ENCODE measurements at regions of chr9 and their contacts with region 1.

Region 1: DNA sequence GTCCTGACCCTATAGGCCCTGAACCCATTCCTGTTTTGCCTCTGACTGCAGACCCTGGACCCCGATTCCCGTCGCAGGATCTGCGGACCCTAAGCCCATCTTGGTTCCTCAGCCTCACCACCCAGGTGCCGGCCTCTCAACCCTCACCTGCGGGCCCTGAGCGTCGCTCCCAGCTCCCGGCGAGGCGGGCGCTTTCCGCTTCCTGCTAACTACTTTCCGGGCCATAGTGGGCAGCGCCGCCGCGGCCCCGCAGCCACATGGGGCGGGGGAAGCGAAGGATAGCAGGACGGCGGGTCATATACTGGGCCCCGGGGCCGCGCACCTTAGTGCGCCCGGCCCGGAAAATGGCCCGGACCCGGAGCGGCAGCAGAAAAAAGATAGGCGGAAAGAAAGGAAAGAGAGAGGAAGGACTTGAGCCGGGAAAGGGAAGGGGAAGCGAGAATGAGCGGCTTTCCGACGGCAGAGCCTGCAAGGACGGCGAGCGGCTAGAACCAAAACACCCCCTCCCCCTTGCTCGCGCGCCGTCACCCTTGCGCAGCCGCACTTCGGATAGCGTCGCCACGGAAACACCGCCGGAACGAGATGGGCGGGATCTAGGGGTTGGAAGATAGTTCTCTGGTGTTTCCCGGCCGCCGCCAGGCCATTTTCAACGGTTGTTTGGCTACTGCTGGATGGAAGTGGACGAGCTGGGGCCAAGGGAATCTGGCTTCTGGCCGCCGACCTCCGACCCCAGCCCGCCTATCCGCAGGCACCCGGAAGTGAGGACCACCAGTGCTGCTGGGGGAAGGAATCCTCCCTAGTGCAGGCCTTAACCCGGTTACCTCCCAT is at the start of gene DCAF12:
- DNase-seq: peak; percentile 74 to 82
- H3K4me3 ChIP-seq: peak within 1 kb of the TSS; percentile 97
- H3K27ac ChIP-seq: peak within 1 kb of the TSS; percentile 71
- H3K4me1 ChIP-seq: peaks cover 14% of the 10 kb centered on the region
- H3K27me3 ChIP-seq: no peaks in the 10 kb centered on the region
- CTCF ChIP-seq: no peak
- total RNA-seq, gene DCAF12: 18.1 and 23.4 TPM in 2 replicates

Region 2: DNA sequence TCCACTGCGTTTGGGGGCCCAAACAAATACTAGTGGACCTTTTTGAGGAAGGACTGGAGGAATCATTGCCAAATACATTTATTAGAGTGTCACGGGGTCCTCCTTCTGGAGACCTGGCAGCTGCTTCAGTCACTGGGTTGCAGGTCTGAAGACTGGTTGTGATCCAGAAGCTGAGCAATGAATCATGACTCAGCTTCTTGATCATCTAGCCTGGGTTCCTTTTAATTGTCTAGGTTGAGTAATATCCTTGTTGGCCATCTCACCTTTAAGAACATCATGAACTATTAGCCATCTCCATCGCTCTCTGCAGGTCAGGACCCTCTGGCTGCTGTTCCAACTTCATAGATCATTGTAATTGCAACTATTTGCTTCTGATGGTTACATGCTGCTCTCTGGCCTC is 37.0 kb after region 1 on chr9:
- CTCF ChIA-PET with region 1: no interaction called
- POLR2A ChIA-PET with region 1: no interaction called
- intact Hi-C with region 1: no loop called
- DNase-seq: peak; percentile 4 to 45
- H3K4me3 ChIP-seq: no peak overlapping the region
- H3K27ac ChIP-seq: peak overlapping the region; percentile 48; the same call in 1 of the 2 replicates
- H3K4me1 ChIP-seq: peaks cover 12% of the 10 kb centered on the region
- H3K27me3 ChIP-seq: no peaks in the 10 kb centered on the region
- CTCF ChIP-seq: no peak

Region 3: GRCh38 chr9:34179213-34180136 is 53.1 kb after region 1 on chr9:
- CTCF ChIA-PET with region 1: no interaction called
- POLR2A ChIA-PET with region 1: interaction called, 3 read pairs
- intact Hi-C with region 1: loop called (anchors 2 kb)
- DNase-seq: peak in 1 of 2 experiments; percentile 51
- H3K4me3 ChIP-seq: peak overlapping the region; percentile 76
- H3K27ac ChIP-seq: peak overlapping the region; percentile 91
- H3K4me1 ChIP-seq: peaks cover 20% of the 10 kb centered on the region
- H3K27me3 ChIP-seq: no peaks in the 10 kb centered on the region
- CTCF ChIP-seq: no peak

Region 4: DNA sequence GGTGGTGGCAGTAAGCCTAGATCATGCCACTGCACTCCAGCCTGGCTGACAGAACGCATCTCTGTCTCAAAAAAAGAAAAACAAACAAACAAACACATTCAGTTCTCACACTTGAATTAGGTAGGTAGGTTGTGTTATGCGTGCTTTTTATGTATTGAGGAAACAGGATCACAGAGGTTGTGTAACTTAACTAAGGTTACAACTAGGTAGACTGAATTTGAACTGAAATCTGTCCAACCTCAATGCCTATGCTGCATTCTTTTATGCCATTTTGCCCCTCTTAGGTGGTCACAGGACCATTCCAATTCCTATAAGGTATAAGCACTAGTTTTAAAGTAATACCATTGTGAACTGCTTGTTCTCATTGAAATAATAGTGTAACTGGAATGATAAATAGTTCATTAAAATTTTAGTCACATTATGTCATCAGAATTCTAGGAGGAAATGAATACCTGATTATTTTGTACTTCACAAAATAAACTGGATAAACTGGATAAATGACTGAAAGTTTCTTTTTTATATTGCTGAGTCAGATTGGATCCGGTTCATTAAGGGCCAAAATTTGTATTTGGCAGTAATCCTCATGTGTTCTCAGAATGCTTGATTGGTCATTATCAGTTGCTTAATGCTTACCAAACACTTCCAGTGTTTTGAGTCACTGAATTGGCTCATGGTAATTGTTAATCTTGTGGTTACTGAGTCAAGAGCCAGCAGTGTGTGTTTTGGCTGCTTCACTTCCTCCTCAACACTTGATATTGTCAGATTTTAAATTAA is 59.5 kb after region 1 on chr9:
- CTCF ChIA-PET with region 1: no interaction called
- POLR2A ChIA-PET with region 1: no interaction called
- intact Hi-C with region 1: loop called (anchors 1 kb)
- DNase-seq: peak; percentile 25 to 96
- H3K4me3 ChIP-seq: peak overlapping the region; percentile 17; the same call in 1 of the 2 replicates
- H3K27ac ChIP-seq: peak overlapping the region; percentile 99
- H3K4me1 ChIP-seq: peaks cover 32% of the 10 kb centered on the region
- H3K27me3 ChIP-seq: no peaks in the 10 kb centered on the region
- CTCF ChIP-seq: no peak

Region 5: GRCh38 chr9:34493972-34494535 is 367.6 kb after region 1 on chr9:
- CTCF ChIA-PET with region 1: no interaction called
- POLR2A ChIA-PET with region 1: no interaction called
- intact Hi-C with region 1: no loop called
- DNase-seq: no peak
- H3K4me3 ChIP-seq: no peak overlapping the region
- H3K27ac ChIP-seq: no peak overlapping the region
- H3K4me1 ChIP-seq: no peaks in the 10 kb centered on the region
- H3K27me3 ChIP-seq: no peaks in the 10 kb centered on the region
- CTCF ChIP-seq: no peak

Measured in PC-9 (cell line).